Calu3 (cell line): ENCODE measurements at regions of chr18 and their contacts with region 1.

Region 1: DNA sequence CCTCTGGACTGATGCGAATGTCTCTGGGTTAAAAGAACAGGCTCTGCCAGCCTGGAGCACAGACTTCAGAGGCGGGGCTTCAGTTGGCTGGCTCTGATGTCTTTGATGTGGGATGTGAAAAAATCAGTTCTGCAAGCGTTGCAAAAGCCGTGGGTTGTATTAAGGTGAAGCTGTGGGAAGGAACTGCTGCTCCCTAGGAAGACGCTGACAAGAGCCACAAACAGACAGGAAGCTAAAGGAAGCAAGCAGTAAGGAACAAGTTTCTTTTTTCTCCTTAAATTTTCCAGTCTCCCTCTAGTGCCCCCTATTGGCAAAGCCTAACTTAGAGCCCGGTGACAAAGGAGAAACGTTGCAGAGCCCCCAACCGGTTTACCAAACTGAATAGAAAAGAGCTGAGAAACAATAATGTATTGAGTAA is 239.0 kb downstream of the CCDC178 start:
- DNase-seq: peak; percentile 61
- H3K4me3 Mint-ChIP-seq: peak overlapping the region; percentile 23
- H3K27ac Mint-ChIP-seq: no peak overlapping the region
- H3K4me1 Mint-ChIP-seq: no peaks in the 10 kb centered on the region
- H3K27me3 Mint-ChIP-seq: no peaks in the 10 kb centered on the region
- CTCF ChIP-seq: peak; percentile 69

Region 2: DNA sequence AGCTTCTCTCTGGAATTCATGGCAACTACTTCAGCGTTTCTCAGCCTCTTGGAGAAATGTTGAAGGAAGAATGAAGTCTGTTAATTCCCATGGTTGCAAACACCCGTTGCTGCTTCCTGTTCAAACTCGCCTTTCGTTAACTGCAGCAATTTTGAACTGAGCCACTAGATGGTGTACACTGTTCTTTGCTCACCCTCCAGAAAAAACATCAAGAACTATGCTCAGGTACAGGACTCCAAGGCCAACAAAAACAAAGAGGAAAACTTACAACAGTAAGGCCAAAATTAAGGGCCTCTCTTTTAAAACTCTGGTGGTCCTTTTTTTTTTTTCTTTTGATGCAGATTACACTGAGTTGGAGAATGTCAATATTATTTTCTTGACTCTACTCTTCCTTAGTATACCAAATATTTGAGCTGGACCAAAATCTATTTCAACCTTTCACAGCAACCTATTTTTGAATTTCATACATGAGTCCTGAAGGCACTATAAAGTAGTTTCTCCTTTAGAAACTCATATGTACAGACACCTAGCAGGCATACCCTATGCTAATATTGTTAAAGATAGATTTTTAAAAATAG is 486.9 kb before region 1 on chr18:
- CTCF ChIA-PET with region 1: interaction called, 3 read pairs
- intact Hi-C with region 1: loop called (anchors 5 kb)
- DNase-seq: peak; percentile 61
- H3K4me3 Mint-ChIP-seq: no peak overlapping the region
- H3K27ac Mint-ChIP-seq: no peak overlapping the region
- H3K4me1 Mint-ChIP-seq: no peaks in the 10 kb centered on the region
- H3K27me3 Mint-ChIP-seq: no peaks in the 10 kb centered on the region
- CTCF ChIP-seq: peak; percentile 42

Region 3: DNA sequence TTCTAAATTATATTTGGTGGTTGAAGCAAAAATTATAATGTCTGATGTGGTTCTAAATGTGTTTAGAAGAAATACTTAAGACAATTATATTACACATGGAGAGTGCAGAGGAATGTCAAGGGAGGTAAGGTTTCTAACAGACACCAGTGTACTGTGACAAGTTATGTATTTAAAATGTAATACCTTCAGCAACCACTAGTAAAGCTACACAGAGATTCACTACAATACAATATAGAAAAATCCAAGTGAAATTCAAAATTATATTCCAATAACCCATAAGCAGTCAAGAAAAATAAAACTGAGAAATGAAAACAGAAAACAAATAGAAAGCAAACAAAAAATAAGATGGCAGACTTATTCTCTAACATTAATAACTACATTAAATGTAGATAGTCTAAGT is 179.1 kb before region 1 on chr18:
- CTCF ChIA-PET with region 1: no interaction called
- intact Hi-C with region 1: loop called (anchors 10 kb)
- DNase-seq: no peak
- H3K4me3 Mint-ChIP-seq: no peak overlapping the region
- H3K27ac Mint-ChIP-seq: no peak overlapping the region
- H3K4me1 Mint-ChIP-seq: no peaks in the 10 kb centered on the region
- H3K27me3 Mint-ChIP-seq: no peaks in the 10 kb centered on the region
- CTCF ChIP-seq: no peak

Region 4: DNA sequence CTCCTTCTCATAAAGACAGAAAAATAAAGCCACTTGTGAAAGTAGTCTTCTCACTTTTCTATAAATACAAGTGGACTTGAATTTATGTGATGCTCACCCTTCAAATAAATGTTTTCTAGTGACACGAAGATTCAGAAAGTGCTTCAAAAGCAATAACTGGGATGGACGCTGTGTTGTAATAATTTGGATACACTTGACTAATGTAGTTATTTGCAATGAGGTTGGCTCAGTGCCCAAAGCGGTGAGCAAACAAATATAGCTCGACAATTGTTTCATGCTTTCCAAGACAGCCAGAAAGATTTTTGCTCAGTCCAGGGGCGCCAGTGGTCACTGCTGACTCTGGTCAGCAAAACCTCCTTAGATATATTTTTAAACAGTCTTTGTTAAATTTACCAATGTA is 150.1 kb before region 1 on chr18:
- CTCF ChIA-PET with region 1: no interaction called
- intact Hi-C with region 1: no loop called
- DNase-seq: peak; percentile 45
- H3K4me3 Mint-ChIP-seq: no peak overlapping the region
- H3K27ac Mint-ChIP-seq: no peak overlapping the region
- H3K4me1 Mint-ChIP-seq: no peaks in the 10 kb centered on the region
- H3K27me3 Mint-ChIP-seq: no peaks in the 10 kb centered on the region
- CTCF ChIP-seq: no peak